ENCODE measurements at regions of chr3 and their contacts with region 1.

Region 1: GRCh38 chr3:5006755-5007202 is 27.5 kb downstream of the BHLHE40 start:
- DNase-seq: peak; percentile 88
- H3K4me3 Mint-ChIP-seq: peak overlapping the region; percentile 71
- H3K27ac Mint-ChIP-seq: peak overlapping the region; percentile 89
- H3K4me1 Mint-ChIP-seq: peaks cover 72% of the 10 kb centered on the region
- H3K27me3 Mint-ChIP-seq: no peaks in the 10 kb centered on the region

Region 2: DNA sequence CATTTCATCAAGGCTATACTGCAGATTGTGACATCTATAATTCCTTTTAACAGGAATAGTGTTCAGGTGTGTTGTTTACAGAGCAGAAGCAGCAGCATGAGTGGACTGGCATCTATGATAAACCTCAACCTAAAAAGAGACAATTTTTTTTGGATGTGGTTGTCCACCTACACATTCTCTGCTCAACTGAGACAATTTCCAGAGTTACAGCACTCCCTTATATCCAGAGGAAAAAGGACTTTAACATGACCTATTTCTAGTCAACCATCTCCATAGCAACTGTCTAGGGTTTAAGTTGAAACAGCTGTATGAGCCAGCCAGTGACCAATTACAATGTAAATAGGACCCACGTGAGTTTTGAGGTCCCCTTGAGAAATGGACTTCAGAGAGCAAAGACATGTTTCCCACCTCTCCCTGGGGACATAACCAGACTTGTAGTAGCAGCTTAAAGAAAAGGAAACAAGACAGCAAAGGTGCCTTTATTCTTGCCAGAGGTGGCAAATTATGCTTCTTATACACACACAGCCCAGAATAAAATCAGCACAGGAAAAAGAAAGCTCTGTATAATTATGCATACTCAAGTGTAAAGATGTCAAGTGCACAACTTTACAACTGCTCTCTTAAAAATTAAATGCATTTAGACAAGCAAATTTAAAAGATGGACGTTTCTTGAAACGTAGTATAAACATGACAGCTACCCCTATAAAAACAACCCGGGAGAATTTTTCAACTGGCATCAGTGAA is 580.0 kb before region 1 on chr3:
- intact Hi-C with region 1: loop called (anchors 10 kb)
- DNase-seq: no peak
- H3K4me3 Mint-ChIP-seq: no peak overlapping the region
- H3K27ac Mint-ChIP-seq: no peak overlapping the region
- H3K4me1 Mint-ChIP-seq: peaks cover 25% of the 10 kb centered on the region
- H3K27me3 Mint-ChIP-seq: no peaks in the 10 kb centered on the region

Region 3: DNA sequence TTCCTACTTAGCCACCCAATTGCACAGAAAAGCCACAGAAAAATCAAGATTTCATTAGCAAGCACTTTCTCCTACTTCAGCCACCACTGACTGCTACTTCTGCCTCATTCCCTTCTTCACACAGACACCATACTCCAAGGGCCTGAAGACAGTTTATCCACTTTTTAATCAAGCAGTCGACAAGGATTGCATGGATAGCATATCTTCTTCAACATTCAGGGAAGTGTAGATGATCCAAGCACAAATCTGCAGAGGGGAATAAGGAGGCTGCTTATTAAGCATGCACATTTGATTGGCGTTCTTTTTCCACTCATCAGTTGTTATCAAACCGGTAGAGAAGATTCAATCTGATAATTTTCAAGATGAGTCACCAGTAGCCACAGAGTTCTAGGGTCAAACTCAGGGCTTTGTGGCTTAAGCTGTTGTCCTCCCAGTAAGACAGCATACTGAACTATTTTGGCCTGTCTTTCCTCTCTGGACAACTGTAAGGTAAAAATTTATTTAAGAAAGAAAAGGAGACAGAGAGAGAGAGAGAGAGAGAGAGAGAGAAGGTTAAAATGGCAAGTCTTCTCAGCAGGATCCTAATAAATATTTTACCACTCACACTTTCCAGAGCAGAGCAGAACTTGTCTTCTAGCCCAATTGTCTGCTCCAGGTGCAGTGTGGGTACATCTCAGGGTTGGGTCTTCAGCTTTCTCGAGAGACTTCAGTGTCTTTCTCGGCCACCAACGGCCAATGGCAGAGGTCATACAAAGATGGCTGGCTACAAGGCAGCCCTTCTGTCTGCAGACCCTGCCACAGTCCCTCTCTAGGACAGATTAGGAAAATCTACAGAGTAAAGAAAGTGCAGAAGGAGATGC is 108.1 kb before region 1 on chr3:
- intact Hi-C with region 1: no loop called
- DNase-seq: no peak
- H3K4me3 Mint-ChIP-seq: peak overlapping the region; percentile 15
- H3K27ac Mint-ChIP-seq: peak overlapping the region; percentile 90
- H3K4me1 Mint-ChIP-seq: peaks cover 76% of the 10 kb centered on the region
- H3K27me3 Mint-ChIP-seq: no peaks in the 10 kb centered on the region

Region 4: GRCh38 chr3:4986782-4987537 is 19.8 kb before region 1 on chr3:
- intact Hi-C with region 1: loop called (anchors 1 kb)
- DNase-seq: peak; percentile 78
- H3K4me3 Mint-ChIP-seq: peak overlapping the region; percentile 90
- H3K27ac Mint-ChIP-seq: peak overlapping the region; percentile 84
- H3K4me1 Mint-ChIP-seq: peaks cover 64% of the 10 kb centered on the region
- H3K27me3 Mint-ChIP-seq: no peaks in the 10 kb centered on the region

Region 5: DNA sequence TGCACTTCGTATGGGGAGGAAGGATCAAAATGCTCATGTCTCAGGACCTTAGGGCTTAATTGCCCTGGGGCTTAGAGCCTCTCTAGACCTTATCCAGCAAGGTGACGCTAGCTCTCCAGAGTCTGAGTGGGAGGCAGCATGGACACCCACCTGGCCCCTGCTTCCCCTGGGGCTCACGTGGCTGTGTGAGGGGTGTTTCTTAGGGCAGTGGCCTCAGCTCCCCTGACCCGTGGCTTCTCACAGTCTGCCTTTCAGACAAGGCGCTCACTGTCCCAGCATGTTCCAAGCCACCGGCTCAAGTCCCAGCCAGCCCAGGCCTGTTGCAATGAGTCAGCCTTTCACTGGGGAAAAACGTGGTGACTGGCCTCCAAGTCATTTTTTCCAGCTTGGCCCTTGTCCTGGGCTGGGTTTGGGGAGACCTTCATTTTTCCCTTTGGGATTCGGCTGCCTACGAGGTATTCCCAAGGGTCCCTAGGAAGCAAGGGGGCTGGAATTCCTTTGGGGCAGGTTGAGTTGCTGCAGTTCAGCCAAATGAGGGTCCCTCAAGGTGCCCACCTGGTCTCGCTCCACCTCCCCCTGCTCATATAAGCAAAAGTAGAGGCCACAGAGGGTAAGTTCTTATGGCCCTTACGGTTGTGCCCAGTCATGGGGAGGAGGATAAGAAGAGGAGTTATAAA is 11.8 kb before region 1 on chr3:
- intact Hi-C with region 1: loop called (anchors 1 kb)
- DNase-seq: no peak
- H3K4me3 Mint-ChIP-seq: no peak overlapping the region
- H3K27ac Mint-ChIP-seq: no peak overlapping the region
- H3K4me1 Mint-ChIP-seq: peaks cover 63% of the 10 kb centered on the region
- H3K27me3 Mint-ChIP-seq: no peaks in the 10 kb centered on the region

Region 6: GRCh38 chr3:5026331-5027218 is 19.8 kb after region 1 on chr3:
- intact Hi-C with region 1: loop called (anchors 1 kb)
- DNase-seq: peak; percentile 59
- H3K4me3 Mint-ChIP-seq: peak overlapping the region; percentile 81
- H3K27ac Mint-ChIP-seq: peak overlapping the region; percentile 95
- H3K4me1 Mint-ChIP-seq: peaks cover 70% of the 10 kb centered on the region
- H3K27me3 Mint-ChIP-seq: no peaks in the 10 kb centered on the region

Region 7: DNA sequence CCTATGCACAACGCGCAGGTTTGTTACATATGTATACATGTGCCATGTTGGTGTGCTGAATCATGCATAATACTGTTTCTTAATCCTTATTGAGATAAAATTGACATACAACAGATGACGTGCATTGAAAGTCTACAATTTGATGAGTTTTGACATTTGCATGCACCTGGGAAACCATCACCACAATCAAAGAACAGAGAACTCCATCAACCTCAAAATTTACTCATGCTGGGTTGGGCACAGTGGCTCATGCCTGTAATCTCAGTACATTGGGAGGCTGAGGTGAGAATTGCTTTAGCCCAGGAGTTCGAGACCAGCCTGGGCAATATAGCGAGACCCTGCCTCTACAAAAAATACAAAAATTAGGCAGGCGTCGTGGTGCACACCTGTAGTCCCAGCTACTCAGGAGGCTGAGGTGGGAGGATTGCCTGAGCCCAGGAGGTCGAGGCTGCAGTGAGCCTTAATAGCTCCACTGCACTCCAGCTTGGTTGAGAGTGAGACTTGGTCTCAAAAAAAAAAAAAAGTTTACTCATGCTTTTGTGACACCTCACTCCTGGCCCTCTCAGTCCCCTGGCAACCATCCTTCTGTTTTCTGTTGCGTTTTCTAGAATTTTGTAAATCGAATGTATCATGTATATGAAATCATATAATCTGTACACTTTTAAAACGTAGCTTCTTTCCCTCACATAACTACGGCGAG is 29.1 kb after region 1 on chr3:
- intact Hi-C with region 1: loop called (anchors 1 kb)
- DNase-seq: no peak
- H3K4me3 Mint-ChIP-seq: no peak overlapping the region
- H3K27ac Mint-ChIP-seq: peak overlapping the region; percentile 55
- H3K4me1 Mint-ChIP-seq: peaks cover 55% of the 10 kb centered on the region
- H3K27me3 Mint-ChIP-seq: no peaks in the 10 kb centered on the region

Region 8: GRCh38 chr3:5767304-5767703 is 760.5 kb after region 1 on chr3:
- intact Hi-C with region 1: no loop called
- DNase-seq: no peak
- H3K4me3 Mint-ChIP-seq: no peak overlapping the region
- H3K27ac Mint-ChIP-seq: no peak overlapping the region
- H3K4me1 Mint-ChIP-seq: peaks cover 4% of the 10 kb centered on the region
- H3K27me3 Mint-ChIP-seq: no peaks in the 10 kb centered on the region

Measured in activated T-helper 1 cell treated with anti-CD3 and anti-CD28 coated beads, Interleukin-12 subunit alpha, Interleukin-12 subunit beta, Interleukin-2, Interleukin-4 antibody, amounts not matched to agents 30 ng/mL and 10 ng/mL and 1 ng/mL, durations not matched to agents 14 hours and 24 hours and 36 hours (primary cell).